H1 (cell line): ENCODE measurements at regions of chr5 and their contacts with region 1.

Region 1: DNA sequence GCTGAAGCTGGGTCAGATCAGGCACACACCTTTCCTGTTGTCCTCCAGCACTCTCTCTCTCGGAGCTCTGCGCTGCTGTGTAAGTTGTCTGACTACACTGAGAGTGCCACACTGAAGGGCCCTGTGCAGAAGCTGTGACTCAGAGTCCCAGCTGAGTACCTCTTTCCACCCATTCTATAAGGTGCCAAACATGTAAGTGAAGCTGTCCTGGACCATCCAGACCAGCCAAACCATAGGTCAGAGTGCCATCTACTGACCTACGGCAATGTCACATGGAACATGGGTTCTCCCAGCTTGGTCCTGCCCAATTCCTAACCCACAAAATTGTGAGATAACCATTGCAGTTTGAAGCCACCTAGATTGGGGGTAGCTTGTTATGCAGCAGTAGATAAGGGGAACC is 68.2 kb downstream of the ADCY2 start:
- DNase-seq: no peak
- H3K4me3 ChIP-seq: no peak overlapping the region
- H3K27ac ChIP-seq: no peak overlapping the region
- H3K4me1 ChIP-seq: peaks cover 0 to 13% (median 4%) of the 10 kb centered on the region in 4 experiments; a peak in 5 of 7 replicates
- H3K27me3 ChIP-seq: no peaks in the 10 kb centered on the region
- CTCF ChIP-seq: peak; percentile 40 to 54 (median 49)
- EP300 ChIP-seq: no peak
- POLR2A ChIP-seq: no peak
- RAD21 ChIP-seq: peak; percentile 73 to 77

Region 2: DNA sequence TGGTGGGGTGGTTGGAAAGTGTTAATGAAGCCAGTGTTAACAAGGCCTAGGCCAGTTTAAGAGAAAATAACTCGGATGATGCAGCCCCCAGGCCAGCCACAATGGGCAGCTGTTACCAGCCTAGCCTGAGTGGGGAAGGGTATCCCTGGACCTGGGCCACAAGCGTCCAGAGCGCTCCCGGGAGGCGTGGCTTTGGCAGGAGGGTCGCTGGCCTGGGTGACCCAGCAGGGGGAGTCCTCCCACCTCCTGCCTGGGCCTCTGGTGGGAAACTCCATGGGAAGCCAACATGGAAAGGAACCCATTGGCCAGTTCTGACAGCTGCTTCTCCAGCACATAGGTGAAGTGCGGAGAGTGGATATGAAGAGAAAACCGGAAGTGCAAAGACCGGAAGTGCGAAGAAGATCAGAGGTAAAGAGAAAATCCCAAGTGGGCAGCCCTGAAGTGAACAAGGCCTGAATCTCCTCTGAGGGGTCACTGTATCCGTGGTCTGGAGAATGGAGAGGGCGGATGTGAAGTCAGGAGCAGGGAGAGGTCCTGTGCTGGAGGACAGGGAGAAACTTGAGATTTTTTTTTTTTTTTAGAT is 10.7 kb after region 1 on chr5:
- CTCF ChIA-PET with region 1: interaction called, 19 read pairs
- POLR2A ChIA-PET with region 1: no interaction called
- DNase-seq: no peak
- H3K4me3 ChIP-seq: no peak overlapping the region
- H3K27ac ChIP-seq: peak overlapping the region; percentile 10; the same call in 1 of the 2 replicates
- H3K4me1 ChIP-seq: peaks cover 3 to 18% (median 10%) of the 10 kb centered on the region in 4 experiments
- H3K27me3 ChIP-seq: no peaks in the 10 kb centered on the region
- CTCF ChIP-seq: peak; percentile 16 to 40 (median 31); a peak in 2 of 4 replicates
- EP300 ChIP-seq: no peak
- POLR2A ChIP-seq: no peak
- RAD21 ChIP-seq: peak; percentile 33 to 39; a peak in 3 of 4 replicates